HEK293 (cell line): ENCODE measurements at regions of chr1 and their contacts with region 1.

Region 1: GRCh38 chr1:47388891-47389238 is 27.2 kb upstream of the FOXE3 start:
- H3K4me3 ChIP-seq: no peak overlapping the region
- H3K27ac ChIP-seq: no peak overlapping the region
- H3K4me1 ChIP-seq: no peaks in the 10 kb centered on the region
- CTCF ChIP-seq: peak; percentile 79

Region 2: DNA sequence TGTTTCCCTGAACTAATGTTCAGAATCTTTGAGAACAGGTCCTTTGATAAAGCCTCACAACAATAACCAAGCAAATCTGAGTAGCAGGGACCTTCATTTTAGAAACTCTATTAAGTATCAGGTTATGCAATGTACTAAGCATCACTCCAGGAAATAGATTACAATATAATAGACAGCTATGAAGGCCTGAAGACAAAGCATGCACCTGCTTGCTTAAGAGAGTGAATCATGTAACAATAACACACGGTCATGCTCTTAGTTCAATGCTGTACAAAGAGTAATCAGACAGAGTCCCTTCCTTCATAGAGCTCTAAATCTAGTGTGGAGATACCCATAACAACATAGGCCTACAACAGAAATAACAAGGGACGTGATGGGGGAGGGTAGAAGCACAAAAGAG is 63.3 kb before region 1 on chr1:
- CTCF ChIA-PET with region 1: no interaction called
- POLR2A ChIA-PET with region 1: no interaction called
- H3K4me3 ChIP-seq: no peak overlapping the region
- H3K27ac ChIP-seq: no peak overlapping the region
- H3K4me1 ChIP-seq: no peaks in the 10 kb centered on the region; the same call in 1 of the 2 replicates
- CTCF ChIP-seq: no peak

Region 3: GRCh38 chr1:47378147-47378546 is 10.7 kb before region 1 on chr1:
- CTCF ChIA-PET with region 1: interaction called, 13 read pairs
- POLR2A ChIA-PET with region 1: no interaction called
- H3K4me3 ChIP-seq: no peak overlapping the region
- H3K27ac ChIP-seq: no peak overlapping the region
- H3K4me1 ChIP-seq: 0 out of 2 replicates have a peak, but pooled peaks cover 5% of the 10 kb centered on the region
- CTCF ChIP-seq: no peak

Region 4: DNA sequence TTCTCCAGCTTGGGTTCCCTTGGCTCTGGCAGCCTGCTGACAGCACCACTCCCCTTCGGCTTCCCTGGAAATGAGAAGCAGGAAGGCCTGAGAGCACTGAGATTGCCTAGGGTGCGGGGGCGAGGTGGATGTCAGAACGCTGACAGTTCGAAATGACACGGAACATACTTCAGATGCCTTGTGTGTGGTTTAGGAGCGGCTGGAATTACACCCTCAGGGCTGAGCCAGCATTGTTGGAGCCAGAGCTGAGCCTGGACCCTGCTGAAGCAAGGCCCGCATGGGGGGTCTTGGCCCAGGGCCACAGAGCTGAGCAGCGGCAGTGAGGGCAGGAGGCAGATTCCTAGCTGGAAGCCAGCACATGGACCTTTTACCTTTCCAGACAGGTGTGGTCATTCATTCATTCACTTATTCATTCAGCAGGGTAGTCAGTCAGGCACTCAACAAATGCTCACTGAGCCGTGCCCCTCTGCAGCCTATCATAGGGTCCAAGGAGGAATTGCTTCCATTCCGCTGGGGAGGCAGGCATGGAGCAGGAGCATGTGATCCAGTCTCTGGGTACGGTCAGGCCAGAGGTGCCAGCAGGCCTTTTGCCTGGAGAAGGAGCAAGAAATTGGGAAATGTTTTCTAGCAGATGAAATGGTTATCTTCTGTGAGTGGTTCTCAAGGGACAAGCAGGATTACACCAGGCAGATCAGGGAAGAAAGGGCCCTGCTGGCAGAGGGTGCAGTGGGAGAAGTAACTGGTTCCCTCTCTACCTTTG is 20.6 kb after region 1 on chr1:
- CTCF ChIA-PET with region 1: interaction called, 22 read pairs
- POLR2A ChIA-PET with region 1: interaction called, 3 read pairs
- H3K4me3 ChIP-seq: no peak overlapping the region
- H3K27ac ChIP-seq: no peak overlapping the region
- H3K4me1 ChIP-seq: no peaks in the 10 kb centered on the region
- CTCF ChIP-seq: no peak

Region 5: DNA sequence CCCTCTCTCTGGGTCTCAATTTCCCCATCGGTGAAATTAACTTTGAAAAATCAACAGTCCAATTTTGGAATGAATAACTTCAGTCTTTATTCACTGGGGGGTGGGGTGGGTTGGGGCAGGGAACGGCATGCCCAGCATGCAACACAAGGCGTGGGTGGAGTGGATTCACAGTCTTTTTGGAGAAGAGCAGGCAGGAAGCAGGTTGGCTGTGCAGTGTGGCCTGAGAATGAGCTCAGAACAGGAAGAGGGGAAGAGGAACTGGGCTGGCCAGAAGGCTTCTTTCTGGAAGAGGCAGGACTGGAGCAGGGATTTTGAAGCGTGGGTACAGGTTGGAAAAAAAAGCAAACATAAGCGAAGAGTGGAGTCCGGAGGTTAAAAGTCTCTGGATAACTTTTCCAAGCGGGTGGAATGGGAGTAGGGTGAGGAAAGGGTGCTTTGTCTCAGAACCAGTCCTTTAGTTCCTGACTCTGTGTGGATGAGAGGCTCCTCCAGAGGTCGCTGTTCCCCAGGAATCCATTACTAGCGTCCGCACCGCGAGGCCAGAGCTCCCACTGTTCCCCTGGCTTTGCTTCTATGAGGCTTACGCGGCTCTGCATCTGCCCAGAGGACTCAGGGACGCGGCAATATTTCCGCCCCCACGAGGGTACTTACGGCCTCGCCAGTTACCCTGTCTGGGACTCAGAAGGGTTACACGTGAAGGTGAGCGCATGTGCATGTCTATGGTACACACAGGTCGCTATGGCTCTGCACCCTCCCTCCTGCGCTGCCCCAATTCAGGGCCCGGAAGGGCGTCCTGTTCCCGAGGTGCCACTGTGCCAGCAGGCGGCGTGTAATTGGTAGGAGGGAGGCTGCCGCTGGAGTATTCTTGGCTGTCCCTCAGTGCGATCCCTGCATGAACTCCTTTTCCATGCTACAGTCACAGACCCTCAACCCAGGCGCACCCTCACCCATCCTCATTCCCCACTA is 43.5 kb after region 1 on chr1:
- CTCF ChIA-PET with region 1: interaction called, 151 read pairs
- POLR2A ChIA-PET with region 1: interaction called, 7 read pairs
- H3K4me3 ChIP-seq: no peak overlapping the region
- H3K27ac ChIP-seq: no peak overlapping the region
- H3K4me1 ChIP-seq: no peaks in the 10 kb centered on the region
- CTCF ChIP-seq: peak; percentile 80

Region 6: DNA sequence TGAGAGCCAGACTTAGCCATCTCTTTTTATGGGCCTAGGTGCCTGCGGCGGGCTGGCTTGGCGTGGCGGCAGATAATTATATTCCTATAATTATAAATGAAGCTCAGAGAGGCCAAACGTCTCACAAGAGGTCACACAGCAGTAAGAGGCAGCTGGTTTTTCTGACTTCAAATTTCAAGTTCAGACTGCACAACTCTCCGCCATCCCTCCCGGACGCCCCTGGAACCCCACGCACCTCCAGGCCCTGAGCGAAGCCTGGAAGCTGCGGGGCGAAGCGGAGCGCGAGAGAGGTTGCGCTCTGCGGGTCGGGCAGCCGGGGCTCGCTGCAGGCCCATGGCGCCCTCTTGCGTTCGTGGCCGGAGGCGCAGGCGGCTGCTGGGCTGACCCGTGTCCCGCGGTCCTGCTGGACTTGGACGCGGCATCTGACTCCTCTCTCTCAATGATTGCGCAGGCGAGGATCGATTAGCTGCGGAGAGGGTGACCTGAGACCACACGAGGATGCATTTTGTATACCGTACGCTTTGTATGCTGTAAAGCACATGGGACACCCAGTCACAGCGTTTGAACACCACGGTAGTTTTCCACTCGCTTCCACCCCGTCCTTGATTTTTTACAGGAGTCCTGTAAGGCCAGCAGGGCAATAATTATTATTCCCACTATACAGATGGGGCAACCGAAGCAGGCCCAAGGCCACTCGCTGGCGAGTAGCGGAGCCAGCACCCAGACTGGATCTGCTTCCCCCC is 321.6 kb after region 1 on chr1:
- CTCF ChIA-PET with region 1: interaction called, 20 read pairs
- POLR2A ChIA-PET with region 1: interaction called, 3 read pairs
- H3K4me3 ChIP-seq: no peak overlapping the region
- H3K27ac ChIP-seq: peak overlapping the region; percentile 77; the same call in 1 of the 2 replicates
- H3K4me1 ChIP-seq: peaks cover 6% of the 10 kb centered on the region; the same call in 1 of the 2 replicates
- CTCF ChIP-seq: peak; percentile 95